ENCODE measurements at regions of chr6 and their contacts with region 1.

Region 1: GRCh38 chr6:29696155-29697125 is 15.5 kb upstream of the ZFP57 start:
- DNase-seq: peak; percentile 57
- ATAC-seq: peak; percentile 86
- H3K4me3 Mint-ChIP-seq: no peak overlapping the region
- H3K27ac Mint-ChIP-seq: no peak overlapping the region
- H3K4me1 Mint-ChIP-seq: peaks cover 15% of the 10 kb centered on the region
- H3K27me3 Mint-ChIP-seq: no peaks in the 10 kb centered on the region; the same call in none of the 2 replicates
- CTCF ChIP-seq: no peak

Region 2: GRCh38 chr6:29632789-29633533 is 63.5 kb before region 1 on chr6 and contains the start of gene GABBR1:
- CTCF ChIA-PET with region 1: interaction called, 40 read pairs
- POLR2A ChIA-PET with region 1: interaction called, 3 read pairs
- DNase-seq: peak; percentile 90
- ATAC-seq: peak; percentile 51
- H3K4me3 Mint-ChIP-seq: peak within 1 kb of the TSS; percentile 87
- H3K27ac Mint-ChIP-seq: peak within 1 kb of the TSS; percentile 79
- H3K4me1 Mint-ChIP-seq: peaks cover 63% of the 10 kb centered on the region
- H3K27me3 Mint-ChIP-seq: no peaks in the 10 kb centered on the region
- CTCF ChIP-seq: no peak
- total RNA-seq, gene GABBR1: 82.5 to 107 TPM (median 83.0 TPM) in 3 replicates

Region 3: DNA sequence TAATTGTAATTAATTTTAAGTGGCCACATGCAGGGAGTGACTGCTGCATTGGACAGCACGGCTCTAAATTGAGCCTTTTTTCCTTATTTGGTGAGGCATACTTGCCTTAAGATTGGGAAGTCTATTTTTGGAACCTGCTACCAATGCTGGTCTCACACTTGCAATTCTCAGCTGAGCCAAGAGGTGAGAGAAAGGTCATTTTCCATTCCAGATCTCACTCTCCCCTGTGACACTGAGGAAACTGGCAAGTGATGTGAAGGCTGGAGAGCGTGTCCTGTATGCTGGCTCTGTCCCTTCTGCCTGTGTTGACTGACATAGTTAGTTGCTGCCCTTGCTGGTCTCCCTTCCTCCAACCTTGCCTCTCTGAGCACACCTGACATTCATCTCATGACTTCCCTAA is 40.3 kb before region 1 on chr6:
- CTCF ChIA-PET with region 1: interaction called, 531 read pairs
- POLR2A ChIA-PET with region 1: no interaction called
- DNase-seq: no peak
- ATAC-seq: no peak
- H3K4me3 Mint-ChIP-seq: no peak overlapping the region
- H3K27ac Mint-ChIP-seq: peak overlapping the region; percentile 57; the same call in 1 of the 2 replicates
- H3K4me1 Mint-ChIP-seq: peaks cover 62% of the 10 kb centered on the region
- H3K27me3 Mint-ChIP-seq: no peaks in the 10 kb centered on the region
- CTCF ChIP-seq: no peak

Region 4: GRCh38 chr6:29685718-29686326 is 10.6 kb before region 1 on chr6:
- CTCF ChIA-PET with region 1: interaction called, 25 read pairs
- POLR2A ChIA-PET with region 1: no interaction called
- DNase-seq: peak; percentile 84
- ATAC-seq: peak; percentile 88
- H3K4me3 Mint-ChIP-seq: no peak overlapping the region
- H3K27ac Mint-ChIP-seq: no peak overlapping the region
- H3K4me1 Mint-ChIP-seq: peaks cover 15% of the 10 kb centered on the region
- H3K27me3 Mint-ChIP-seq: peaks cover 2% of the 10 kb centered on the region; the same call in 1 of the 2 replicates
- CTCF ChIP-seq: no peak

Region 5: GRCh38 chr6:29752451-29753308 is 56.2 kb after region 1 on chr6:
- CTCF ChIA-PET with region 1: interaction called, 20 read pairs
- POLR2A ChIA-PET with region 1: no interaction called
- DNase-seq: peak; percentile 92
- ATAC-seq: peak; percentile 66
- H3K4me3 Mint-ChIP-seq: peak overlapping the region; percentile 85
- H3K27ac Mint-ChIP-seq: peak overlapping the region; percentile 27; the same call in 1 of the 2 replicates
- H3K4me1 Mint-ChIP-seq: peaks cover 58% of the 10 kb centered on the region
- H3K27me3 Mint-ChIP-seq: peaks cover 54% of the 10 kb centered on the region
- CTCF ChIP-seq: peak; percentile 76

Region 6: DNA sequence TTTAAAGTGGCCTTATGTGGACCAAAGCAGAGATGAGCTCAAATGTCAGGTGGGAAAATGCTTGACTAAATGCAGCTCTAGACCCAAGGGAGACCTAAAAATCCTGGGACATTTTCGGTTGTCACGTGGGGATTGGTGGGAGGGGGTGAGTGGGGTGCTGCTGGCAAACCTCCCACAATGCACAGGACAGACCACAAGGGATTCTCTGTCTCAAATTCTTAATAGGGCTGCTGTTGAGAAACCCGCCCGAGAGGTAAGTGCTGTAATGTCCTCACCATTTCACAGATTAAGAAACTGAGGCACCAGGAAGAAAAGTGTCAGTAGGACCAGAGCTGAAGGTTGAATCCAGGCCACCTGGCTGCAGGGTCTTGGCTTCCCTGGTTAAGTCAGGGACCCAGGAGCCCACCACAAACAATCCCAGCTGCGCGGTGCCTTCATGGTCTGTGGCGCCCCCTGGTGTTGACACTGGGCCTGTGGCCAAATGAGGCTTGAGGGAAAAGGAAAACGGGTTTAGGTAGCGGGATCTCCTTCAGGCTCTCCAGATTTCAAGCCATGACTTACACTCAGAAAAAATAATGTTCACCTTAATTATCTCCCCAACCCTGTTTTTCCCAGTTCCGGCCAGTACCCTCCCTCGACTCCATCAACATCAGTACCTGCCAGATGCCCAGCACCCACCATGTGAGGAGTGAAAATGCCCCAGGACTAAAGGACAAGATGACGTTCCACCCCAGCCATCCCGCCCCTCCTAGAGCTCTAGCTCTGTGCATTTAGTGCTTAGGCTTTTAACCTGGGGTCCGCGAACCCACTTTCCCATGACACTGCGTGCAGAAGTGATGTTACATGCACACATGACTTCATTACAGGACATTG is 138.4 kb after region 1 on chr6:
- CTCF ChIA-PET with region 1: interaction called, 10 read pairs
- POLR2A ChIA-PET with region 1: no interaction called
- DNase-seq: peak; percentile 82
- ATAC-seq: peak; percentile 90
- H3K4me3 Mint-ChIP-seq: no peak overlapping the region
- H3K27ac Mint-ChIP-seq: no peak overlapping the region
- H3K4me1 Mint-ChIP-seq: no peaks in the 10 kb centered on the region; the same call in 1 of the 2 replicates
- H3K27me3 Mint-ChIP-seq: peaks cover 57% of the 10 kb centered on the region
- CTCF ChIP-seq: peak; percentile 98

Measured in WTC11 (cell line).